Naive thymus-derived CD4-positive, alpha-beta T cell (primary cell): ENCODE measurements at regions of chr19 and their contacts with region 1.

Region 1: GRCh38 chr19:43765109-43765876 is 10.5 kb upstream of the SMG9 start:
- DNase-seq: peak in 8 of 9 donors; percentile 20 to 86 (median 38)
- ATAC-seq: peak; percentile 81
- H3K4me3 ChIP-seq: no peak overlapping the region
- H3K4me3 Mint-ChIP-seq: peak overlapping the region; percentile 35 to 80 (median 67)
- H3K27ac ChIP-seq: peak overlapping the region; percentile 45
- H3K27ac Mint-ChIP-seq: peak overlapping the region; percentile 78 to 94 (median 88)
- H3K4me1 ChIP-seq: peaks cover 23 to 32% of the 10 kb centered on the region in 2 donors
- H3K4me1 Mint-ChIP-seq: peaks cover 32 to 73% (median 40%) of the 10 kb centered on the region in 7 donors
- H3K27me3 ChIP-seq: no peaks in the 10 kb centered on the region
- H3K27me3 Mint-ChIP-seq: no peaks in the 10 kb centered on the region

Region 2: GRCh38 chr19:43779820-43780580 is 14.7 kb after region 1 on chr19:
- CTCF ChIA-PET with region 1: interaction called, 12 read pairs
- POLR2A ChIA-PET with region 1: interaction called, 100 read pairs
- intact Hi-C with region 1: loop called (anchors 1 kb)
- DNase-seq: peak in 1 of 9 donors; percentile 21
- ATAC-seq: no peak
- H3K4me3 ChIP-seq: peak overlapping the region; percentile 42
- H3K4me3 Mint-ChIP-seq: peak overlapping the region; percentile 66 to 87 (median 81)
- H3K27ac ChIP-seq: peak overlapping the region; percentile 71
- H3K27ac Mint-ChIP-seq: peak overlapping the region; percentile 86 to 96 (median 93)
- H3K4me1 ChIP-seq: peaks cover 38 to 59% of the 10 kb centered on the region in 2 donors
- H3K4me1 Mint-ChIP-seq: peaks cover 63 to 92% (median 78%) of the 10 kb centered on the region in 7 donors
- H3K27me3 ChIP-seq: no peaks in the 10 kb centered on the region
- H3K27me3 Mint-ChIP-seq: no peaks in the 10 kb centered on the region